ENCODE measurements at regions of chr15 and their contacts with region 1.

Region 1: GRCh38 chr15:97909291-97909891 is 51.1 kb upstream of the ARRDC4 start:
- DNase-seq: peak; percentile 50
- ATAC-seq: peak; percentile 78 to 90

Region 2: GRCh38 chr15:97576929-97577645 is 332.3 kb before region 1 on chr15:
- intact Hi-C with region 1: no loop called
- DNase-seq: no peak
- ATAC-seq: no peak

Region 3: DNA sequence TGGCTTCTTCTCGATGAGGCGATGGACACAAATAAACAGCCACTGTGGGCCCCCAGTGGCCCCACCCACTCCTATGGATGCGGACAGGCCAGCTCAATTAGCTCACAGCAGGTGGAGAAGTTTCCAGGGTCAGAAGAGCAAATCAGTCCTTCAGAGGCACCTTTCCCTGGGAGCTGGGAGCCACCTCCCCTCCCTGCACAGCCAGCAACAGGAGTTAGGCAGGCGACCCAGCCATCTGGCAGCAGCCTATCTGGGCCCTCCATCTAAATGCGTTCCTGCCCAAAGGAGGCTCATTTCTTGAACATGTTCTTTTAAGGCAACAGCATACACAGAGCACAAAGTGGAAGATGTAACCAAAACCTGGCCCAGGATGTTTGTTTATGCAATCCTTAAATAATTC is 160.8 kb before region 1 on chr15:
- intact Hi-C with region 1: no loop called
- DNase-seq: no peak
- ATAC-seq: no peak

Region 4: DNA sequence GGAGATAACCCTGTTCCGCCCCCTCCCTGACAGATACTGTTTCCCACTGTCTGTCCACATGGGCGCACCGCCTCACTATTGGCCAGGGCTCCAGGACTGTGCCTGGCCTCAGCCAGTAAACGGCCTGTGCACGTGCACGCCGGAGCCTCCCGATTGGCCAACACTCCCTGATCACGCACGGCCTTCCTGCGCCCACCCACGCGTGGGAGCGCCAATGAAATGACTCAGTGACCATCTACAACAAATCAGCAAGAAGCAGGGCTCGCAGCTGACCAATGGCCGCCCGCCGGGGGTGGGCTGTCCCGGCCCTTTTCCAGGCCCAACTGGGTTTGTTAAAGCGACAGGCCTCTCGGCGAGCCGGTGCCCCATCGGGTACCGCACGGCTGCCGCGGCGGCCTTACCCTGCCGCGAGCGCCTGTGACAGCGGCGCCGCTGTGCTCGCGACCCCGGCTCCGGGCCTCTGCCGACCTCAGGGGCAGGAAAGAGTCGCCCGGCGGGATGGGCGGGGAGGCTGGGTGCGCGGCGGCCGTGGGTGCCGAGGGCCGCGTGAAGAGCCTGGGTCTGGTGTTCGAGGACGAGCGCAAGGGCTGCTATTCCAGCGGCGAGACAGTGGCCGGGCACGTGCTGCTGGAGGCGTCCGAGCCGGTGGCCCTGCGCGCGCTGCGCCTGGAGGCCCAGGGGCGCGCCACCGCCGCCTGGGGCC is 51.1 kb after region 1 on chr15 and contains the start of gene ARRDC4:
- intact Hi-C with region 1: no loop called
- DNase-seq: peak; percentile 100
- ATAC-seq: peak; percentile 97 to 99
- total RNA-seq, gene ARRDC4: 20.1 to 22.4 TPM

Region 5: GRCh38 chr15:98085003-98085639 is 175.7 kb after region 1 on chr15:
- intact Hi-C with region 1: loop called (anchors 2 to 5 kb)
- DNase-seq: no peak
- ATAC-seq: no peak

Region 6: GRCh38 chr15:98142572-98142971 is 233.2 kb after region 1 on chr15:
- intact Hi-C with region 1: no loop called
- DNase-seq: no peak
- ATAC-seq: no peak

Region 7: GRCh38 chr15:98177924-98178592 is 268.7 kb after region 1 on chr15:
- intact Hi-C with region 1: loop called (anchors 2 to 10 kb)
- DNase-seq: no peak
- ATAC-seq: peak; percentile 86 to 90

Region 8: GRCh38 chr15:98292442-98293240 is 383.2 kb after region 1 on chr15:
- intact Hi-C with region 1: loop called (anchors 5 to 10 kb)
- DNase-seq: peak; percentile 48
- ATAC-seq: peak in 1 of 2 donors; percentile 62

Region 9: DNA sequence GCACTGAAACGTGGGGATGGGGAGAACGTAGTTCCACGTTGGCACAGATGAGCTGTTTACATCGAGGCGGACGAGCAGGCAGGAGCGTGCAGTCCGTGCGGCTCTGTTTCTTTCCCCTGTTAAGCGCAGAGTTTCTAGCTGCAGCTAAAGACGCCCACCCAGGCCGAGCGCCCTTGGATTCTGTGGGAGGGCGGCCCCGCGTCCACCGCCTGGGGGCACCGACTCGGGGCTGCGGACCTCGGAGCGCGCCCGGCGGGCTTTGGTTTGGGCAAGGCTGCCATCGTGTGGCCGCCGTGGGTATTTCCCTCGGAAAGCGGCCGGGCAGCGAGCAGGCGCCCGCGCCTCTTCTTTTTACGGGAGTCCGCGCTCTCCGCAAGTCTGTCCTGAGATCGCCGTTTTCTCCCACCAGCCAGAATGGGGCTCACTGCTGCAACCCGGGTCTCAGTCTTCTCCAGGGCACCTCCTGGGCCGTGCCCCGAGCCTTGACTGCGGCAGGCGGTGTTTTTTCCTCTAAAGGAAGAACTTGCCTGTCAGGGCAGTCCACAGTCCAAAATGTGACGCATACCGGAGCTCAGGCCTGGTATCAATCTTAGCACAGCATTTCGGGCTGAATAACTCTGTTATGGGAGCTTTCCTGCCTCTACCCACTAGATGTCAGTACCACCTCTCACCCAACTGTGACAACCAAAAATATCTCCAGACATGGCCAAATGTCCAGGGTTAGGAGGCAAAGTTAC is 519.0 kb after region 1 on chr15:
- intact Hi-C with region 1: loop called (anchors 10 kb)
- DNase-seq: peak; percentile 79
- ATAC-seq: peak; percentile 88 to 90

Measured in left cardiac atrium (tissue), 4 donors.